ENCODE measurements at regions of chr17 and their contacts with region 1.

Region 1: GRCh38 chr17:40559954-40560591 is 5.2 kb downstream of the CCR7 start:
- DNase-seq: peak; percentile 71
- ATAC-seq: peak; percentile 25
- H3K4me3 Mint-ChIP-seq: peak overlapping the region; percentile 89
- H3K27ac Mint-ChIP-seq: peak overlapping the region; percentile 99
- H3K4me1 Mint-ChIP-seq: peaks cover 81% of the 10 kb centered on the region
- H3K27me3 Mint-ChIP-seq: no peaks in the 10 kb centered on the region
- CTCF ChIP-seq: peak; percentile 74

Region 2: GRCh38 chr17:40399185-40399584 is 160.9 kb before region 1 on chr17:
- CTCF ChIA-PET with region 1: interaction called, 5 read pairs
- POLR2A ChIA-PET with region 1: no interaction called
- intact Hi-C with region 1: loop called (anchors 1 kb)
- DNase-seq: no peak
- ATAC-seq: peak; percentile 61
- H3K4me3 Mint-ChIP-seq: no peak overlapping the region
- H3K27ac Mint-ChIP-seq: no peak overlapping the region
- H3K4me1 Mint-ChIP-seq: peaks cover 15% of the 10 kb centered on the region
- H3K27me3 Mint-ChIP-seq: no peaks in the 10 kb centered on the region
- CTCF ChIP-seq: no peak

Region 3: GRCh38 chr17:40474419-40475002 is 85.6 kb before region 1 on chr17:
- CTCF ChIA-PET with region 1: interaction called, 6 read pairs
- POLR2A ChIA-PET with region 1: interaction called, 13 read pairs
- intact Hi-C with region 1: no loop called
- DNase-seq: no peak
- ATAC-seq: no peak
- H3K4me3 Mint-ChIP-seq: no peak overlapping the region
- H3K27ac Mint-ChIP-seq: no peak overlapping the region
- H3K4me1 Mint-ChIP-seq: peaks cover 16% of the 10 kb centered on the region
- H3K27me3 Mint-ChIP-seq: peaks cover 7% of the 10 kb centered on the region
- CTCF ChIP-seq: no peak

Region 4: DNA sequence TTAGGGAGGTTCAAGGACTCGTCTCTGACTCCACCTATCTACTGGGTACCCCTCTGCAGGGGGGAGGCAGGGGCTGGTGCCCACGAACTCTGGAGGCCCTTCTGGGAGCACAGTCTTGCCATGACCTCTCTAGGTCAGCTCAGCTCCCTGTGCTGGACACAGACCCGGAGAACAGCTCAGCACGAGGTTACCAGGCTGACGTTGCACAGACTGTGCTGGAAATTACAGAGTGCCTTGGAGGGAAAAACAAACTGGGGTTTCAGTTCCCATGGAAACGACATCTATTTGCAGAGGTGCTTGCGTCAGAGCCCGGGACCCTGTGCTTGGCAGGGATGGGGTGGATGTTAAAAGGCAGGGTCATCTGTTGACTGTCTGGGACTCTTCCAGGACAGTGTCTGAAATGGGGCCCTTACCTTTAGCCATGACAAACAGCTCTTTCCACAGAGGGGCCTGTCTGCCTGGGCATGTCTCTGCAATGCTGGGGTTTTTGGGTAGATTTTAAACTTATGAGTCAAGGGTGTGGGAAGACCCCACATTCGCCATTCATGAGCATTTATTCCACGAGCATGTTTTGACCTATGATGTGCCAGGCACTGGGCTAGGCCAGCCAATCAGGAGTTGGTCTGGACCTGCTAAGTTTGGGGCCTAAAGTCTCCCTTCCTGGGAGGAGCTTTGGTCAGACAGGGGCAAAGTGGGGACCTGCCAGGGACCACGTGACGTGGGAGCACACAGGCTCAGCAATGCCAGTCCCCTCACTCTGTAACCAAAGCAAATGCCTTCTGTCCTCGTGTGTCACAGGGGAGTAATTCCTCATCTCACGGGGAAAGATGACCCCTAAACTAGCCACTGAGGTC is 17.3 kb before region 1 on chr17:
- CTCF ChIA-PET with region 1: interaction called, 40 read pairs
- POLR2A ChIA-PET with region 1: interaction called, 1,450 read pairs
- intact Hi-C with region 1: loop called (anchors 1 kb)
- DNase-seq: peak; percentile 40
- ATAC-seq: peak; percentile 63
- H3K4me3 Mint-ChIP-seq: peak overlapping the region; percentile 68
- H3K27ac Mint-ChIP-seq: peak overlapping the region; percentile 93
- H3K4me1 Mint-ChIP-seq: peaks cover 77% of the 10 kb centered on the region
- H3K27me3 Mint-ChIP-seq: no peaks in the 10 kb centered on the region
- CTCF ChIP-seq: no peak

Region 5: DNA sequence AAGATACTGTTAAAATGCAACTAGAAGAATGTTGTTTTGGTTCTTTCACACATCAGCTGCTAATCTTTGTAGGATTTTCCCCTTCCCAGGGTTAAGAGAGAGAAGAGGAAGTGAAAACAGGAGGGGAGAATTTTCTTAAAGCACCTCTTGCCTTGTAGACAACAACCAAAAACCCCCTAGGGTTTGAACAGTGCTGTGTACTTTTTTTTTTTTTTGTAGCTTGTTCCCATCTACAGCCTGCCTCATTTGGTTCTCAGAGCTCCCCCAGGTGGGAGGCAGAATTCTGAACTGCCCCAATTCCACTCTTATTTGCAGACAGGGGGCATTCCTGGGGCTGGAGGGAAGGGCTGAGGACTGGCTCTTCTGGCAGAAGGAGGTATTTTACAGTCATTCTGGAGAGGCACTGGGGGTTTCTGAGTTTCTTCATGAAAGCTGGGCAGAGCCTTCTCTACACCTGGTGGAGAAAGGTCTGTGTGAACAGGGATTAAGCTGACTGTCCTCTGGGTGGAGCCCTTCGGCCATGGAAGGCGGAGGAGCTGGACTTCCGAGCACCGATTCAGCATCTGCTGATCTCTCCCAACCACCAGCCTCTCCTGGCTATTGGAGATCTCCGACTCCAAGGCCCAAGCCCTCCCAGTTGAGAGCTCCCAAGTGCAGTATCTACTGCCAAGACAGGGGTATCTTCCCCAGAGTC is 55.4 kb after region 1 on chr17:
- CTCF ChIA-PET with region 1: interaction called, 426 read pairs
- POLR2A ChIA-PET with region 1: interaction called, 1,885 read pairs
- intact Hi-C with region 1: loop called (anchors 1 kb)
- DNase-seq: peak; percentile 58
- ATAC-seq: peak; percentile 83
- H3K4me3 Mint-ChIP-seq: peak overlapping the region; percentile 77
- H3K27ac Mint-ChIP-seq: peak overlapping the region; percentile 96
- H3K4me1 Mint-ChIP-seq: peaks cover 81% of the 10 kb centered on the region
- H3K27me3 Mint-ChIP-seq: no peaks in the 10 kb centered on the region
- CTCF ChIP-seq: no peak

Region 6: GRCh38 chr17:40726919-40727318 is 166.8 kb after region 1 on chr17:
- CTCF ChIA-PET with region 1: no interaction called
- POLR2A ChIA-PET with region 1: interaction called, 6 read pairs
- intact Hi-C with region 1: loop called (anchors 5 kb)
- DNase-seq: no peak
- ATAC-seq: no peak
- H3K4me3 Mint-ChIP-seq: peak overlapping the region; percentile 12
- H3K27ac Mint-ChIP-seq: peak overlapping the region; percentile 74
- H3K4me1 Mint-ChIP-seq: peaks cover 26% of the 10 kb centered on the region
- H3K27me3 Mint-ChIP-seq: no peaks in the 10 kb centered on the region
- CTCF ChIP-seq: no peak